CD4-positive, alpha-beta T cell (primary cell): ENCODE measurements at regions of chr14 and their contacts with region 1.

Region 1: DNA sequence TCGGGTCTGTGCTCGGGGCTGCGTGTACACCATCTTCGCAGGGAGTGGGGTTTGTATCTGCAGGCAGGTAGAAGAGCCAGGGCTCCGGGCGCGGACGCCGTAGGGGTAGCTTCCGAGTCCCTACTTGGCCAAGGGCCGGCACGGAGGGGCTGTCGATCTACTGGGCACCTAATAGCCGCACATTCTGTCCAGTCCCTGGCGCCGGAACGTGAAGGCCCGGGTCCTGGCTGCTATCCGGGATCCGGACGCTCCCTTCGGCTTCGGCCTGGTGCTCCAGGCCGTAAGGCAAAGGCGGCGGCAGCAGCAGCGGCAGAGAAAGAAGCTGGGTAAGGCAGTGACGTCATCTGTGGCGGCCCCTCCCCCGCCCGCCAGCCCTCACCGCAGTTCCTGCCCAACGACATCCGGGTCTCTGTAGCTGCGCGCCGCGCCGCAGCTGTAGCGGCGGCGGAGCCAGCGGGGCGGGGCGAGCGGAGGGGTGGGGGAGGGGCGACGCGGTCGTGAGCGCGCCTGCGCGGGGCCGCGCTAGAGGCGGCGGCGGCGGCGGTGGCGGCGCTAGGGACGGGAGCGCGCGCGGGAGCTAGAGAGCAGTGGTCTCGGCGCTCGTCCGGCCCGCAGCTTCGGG is at the start of gene PPM1A:
- DNase-seq: peak; percentile 94 to 99 (median 96)
- ATAC-seq: peak; percentile 71
- H3K4me3 ChIP-seq: peak within 1 kb of the TSS; percentile 92
- H3K4me3 Mint-ChIP-seq: peak within 1 kb of the TSS; percentile 96
- H3K27ac ChIP-seq: peak within 1 kb of the TSS; percentile 100
- H3K27ac Mint-ChIP-seq: peak within 1 kb of the TSS; percentile 97
- H3K4me1 ChIP-seq: peaks cover 23% of the 10 kb centered on the region
- H3K4me1 Mint-ChIP-seq: peaks cover 53% of the 10 kb centered on the region
- H3K27me3 ChIP-seq: no peaks in the 10 kb centered on the region
- H3K27me3 Mint-ChIP-seq: no peaks in the 10 kb centered on the region
- CTCF ChIP-seq: no peak
- total RNA-seq, gene PPM1A: 96.9 to 97.2 TPM

Region 2: GRCh38 chr14:58427281-58428117 is 1821.3 kb before region 1 on chr14 and contains the starts of genes KIAA0586 and TIMM9:
- CTCF ChIA-PET with region 1: no interaction called
- POLR2A ChIA-PET with region 1: interaction called, 13 read pairs
- intact Hi-C with region 1: no loop called
- DNase-seq: peak; percentile 91 to 99 (median 96)
- ATAC-seq: peak; percentile 90
- H3K4me3 ChIP-seq: peak within 1 kb of the TSS; percentile 81
- H3K4me3 Mint-ChIP-seq: peak within 1 kb of the TSS; percentile 92
- H3K27ac ChIP-seq: peak within 1 kb of the TSS; percentile 86 to 95
- H3K27ac Mint-ChIP-seq: peak within 1 kb of the TSS; percentile 93
- H3K4me1 ChIP-seq: peaks cover 18% of the 10 kb centered on the region
- H3K4me1 Mint-ChIP-seq: peaks cover 70% of the 10 kb centered on the region
- H3K27me3 ChIP-seq: no peaks in the 10 kb centered on the region
- H3K27me3 Mint-ChIP-seq: no peaks in the 10 kb centered on the region
- CTCF ChIP-seq: no peak
- total RNA-seq, gene KIAA0586: 16.5 to 18.2 TPM
- total RNA-seq, gene TIMM9: 33.1 to 34.9 TPM

Region 3: DNA sequence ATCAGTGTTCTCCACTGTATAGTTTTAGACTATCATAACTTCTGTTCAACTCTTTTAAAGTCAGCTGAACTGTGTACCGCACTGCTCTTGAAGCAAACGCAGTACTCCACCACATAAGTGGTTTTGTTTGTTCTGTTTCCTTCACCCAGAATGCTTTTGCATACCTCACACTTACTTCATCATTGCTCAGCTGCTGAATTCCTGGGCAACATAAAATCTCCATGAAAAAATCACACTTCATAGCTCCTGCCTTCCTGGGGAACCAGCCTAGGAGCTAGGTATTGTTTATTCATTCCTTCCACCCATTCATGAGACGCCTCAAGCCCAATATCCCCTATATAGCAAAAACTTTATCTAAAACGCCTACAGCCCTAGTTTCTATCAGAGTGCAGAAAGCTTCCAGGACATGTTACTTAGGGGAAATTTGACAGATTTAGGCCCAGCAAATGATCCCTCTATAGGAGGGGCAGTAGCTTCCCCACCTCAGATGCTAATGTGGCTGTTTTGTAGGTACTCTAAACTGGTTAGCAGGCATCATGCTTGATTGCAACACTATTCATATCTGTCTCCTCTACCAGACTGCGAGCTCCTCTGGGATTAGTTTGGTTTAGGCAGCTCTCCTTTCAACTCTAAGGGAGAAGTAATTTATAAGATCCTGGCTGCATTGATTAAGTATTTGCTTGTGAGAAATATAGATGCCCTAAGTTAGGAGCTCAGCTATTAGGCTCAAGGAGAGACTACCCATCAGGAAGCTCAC is 284.4 kb before region 1 on chr14:
- CTCF ChIA-PET with region 1: interaction called, 8 read pairs
- POLR2A ChIA-PET with region 1: interaction called, 41 read pairs
- intact Hi-C with region 1: loop called in 1 of 2 experiments (anchors 5 kb)
- DNase-seq: peak in 2 of 14 experiments; percentile 13 to 18
- ATAC-seq: peak; percentile 10
- H3K4me3 ChIP-seq: peak overlapping the region; percentile 64
- H3K4me3 Mint-ChIP-seq: peak overlapping the region; percentile 94
- H3K27ac ChIP-seq: no peak overlapping the region
- H3K27ac Mint-ChIP-seq: peak overlapping the region; percentile 96
- H3K4me1 ChIP-seq: peaks cover 9% of the 10 kb centered on the region
- H3K4me1 Mint-ChIP-seq: peaks cover 22% of the 10 kb centered on the region
- H3K27me3 ChIP-seq: no peaks in the 10 kb centered on the region
- H3K27me3 Mint-ChIP-seq: no peaks in the 10 kb centered on the region
- CTCF ChIP-seq: no peak

Region 4: GRCh38 chr14:60164712-60165546 is 83.9 kb before region 1 on chr14 and contains the start of gene DHRS7:
- CTCF ChIA-PET with region 1: no interaction called
- POLR2A ChIA-PET with region 1: interaction called, 93 read pairs
- intact Hi-C with region 1: loop called in 1 of 2 experiments (anchors 5 kb)
- DNase-seq: peak; percentile 33 to 87 (median 54)
- ATAC-seq: peak; percentile 73
- H3K4me3 ChIP-seq: peak within 1 kb of the TSS; percentile 70
- H3K4me3 Mint-ChIP-seq: peak within 1 kb of the TSS; percentile 96
- H3K27ac ChIP-seq: peak within 1 kb of the TSS; percentile 88 to 90
- H3K27ac Mint-ChIP-seq: peak within 1 kb of the TSS; percentile 97
- H3K4me1 ChIP-seq: peaks cover 32% of the 10 kb centered on the region
- H3K4me1 Mint-ChIP-seq: peaks cover 53% of the 10 kb centered on the region
- H3K27me3 ChIP-seq: no peaks in the 10 kb centered on the region
- H3K27me3 Mint-ChIP-seq: no peaks in the 10 kb centered on the region
- CTCF ChIP-seq: no peak
- total RNA-seq, gene DHRS7: 24.5 to 28.6 TPM

Region 5: GRCh38 chr14:60266021-60266937 is 17.5 kb after region 1 on chr14:
- CTCF ChIA-PET with region 1: interaction called, 7 read pairs
- POLR2A ChIA-PET with region 1: interaction called, 16 read pairs
- intact Hi-C with region 1: loop called (anchors 2 kb)
- DNase-seq: peak in 8 of 14 experiments; percentile 1 to 55 (median 20)
- ATAC-seq: peak; percentile 58
- H3K4me3 ChIP-seq: no peak overlapping the region
- H3K4me3 Mint-ChIP-seq: no peak overlapping the region
- H3K27ac ChIP-seq: no peak overlapping the region
- H3K27ac Mint-ChIP-seq: no peak overlapping the region
- H3K4me1 ChIP-seq: peaks cover 2% of the 10 kb centered on the region
- H3K4me1 Mint-ChIP-seq: peaks cover 50% of the 10 kb centered on the region
- H3K27me3 ChIP-seq: no peaks in the 10 kb centered on the region
- H3K27me3 Mint-ChIP-seq: no peaks in the 10 kb centered on the region
- CTCF ChIP-seq: peak; percentile 73

Region 6: GRCh38 chr14:60331201-60332045 is 82.6 kb after region 1 on chr14:
- CTCF ChIA-PET with region 1: interaction called, 5 read pairs
- POLR2A ChIA-PET with region 1: interaction called, 58 read pairs
- intact Hi-C with region 1: loop called in 1 of 2 experiments (anchors 5 kb)
- DNase-seq: peak; percentile 55 to 86 (median 72)
- ATAC-seq: peak; percentile 78
- H3K4me3 ChIP-seq: peak overlapping the region; percentile 54
- H3K4me3 Mint-ChIP-seq: peak overlapping the region; percentile 96
- H3K27ac ChIP-seq: peak overlapping the region in 1 of 2 donors; percentile 29
- H3K27ac Mint-ChIP-seq: peak overlapping the region; percentile 85
- H3K4me1 ChIP-seq: peaks cover 13% of the 10 kb centered on the region
- H3K4me1 Mint-ChIP-seq: peaks cover 32% of the 10 kb centered on the region
- H3K27me3 ChIP-seq: peaks cover 3 to 6% of the 10 kb centered on the region in 2 experiments
- H3K27me3 Mint-ChIP-seq: peaks cover 56% of the 10 kb centered on the region
- CTCF ChIP-seq: peak; percentile 88

Region 7: DNA sequence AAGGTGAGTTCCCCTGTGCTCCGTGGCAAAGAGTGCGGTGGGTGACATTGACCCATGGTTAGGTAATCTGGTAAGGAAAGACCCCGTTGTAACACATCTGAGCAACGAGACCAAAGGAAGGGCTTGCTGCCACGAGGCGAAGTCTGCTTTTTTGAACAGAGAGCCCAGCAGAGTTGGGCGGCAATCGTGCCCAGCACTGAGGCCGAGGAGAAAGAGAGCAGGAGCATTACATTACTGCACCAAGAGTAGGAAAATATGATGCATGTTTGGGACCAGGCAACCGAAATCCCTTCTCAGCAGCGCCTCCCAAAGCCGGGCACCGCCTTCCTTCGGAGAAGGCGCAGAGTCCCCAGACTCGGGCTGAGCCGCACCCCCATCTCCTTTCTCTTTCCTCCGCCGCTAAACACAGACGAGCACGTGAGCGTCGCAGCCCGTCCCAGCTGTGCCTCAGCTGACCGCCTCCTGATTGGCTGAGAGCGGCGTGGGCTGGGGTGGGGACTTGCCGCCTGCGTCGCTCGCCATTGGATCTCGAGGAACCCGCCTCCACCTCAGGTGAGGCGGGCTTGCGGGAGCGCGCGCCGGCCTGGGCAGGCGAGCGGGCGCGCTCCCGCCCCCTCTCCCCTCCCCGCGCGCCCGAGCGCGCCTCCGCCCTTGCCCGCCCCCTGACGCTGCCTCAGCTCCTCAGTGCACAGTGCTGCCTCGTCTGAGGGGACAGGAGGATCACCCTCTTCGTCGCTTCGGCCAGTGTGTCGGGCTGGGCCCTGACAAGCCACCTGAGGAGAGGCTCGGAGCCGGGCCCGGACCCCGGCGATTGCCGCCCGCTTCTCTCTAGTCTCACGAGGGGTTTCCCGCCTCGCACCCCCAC is 1446.3 kb after region 1 on chr14 and contains the start of gene HIF1A:
- CTCF ChIA-PET with region 1: no interaction called
- POLR2A ChIA-PET with region 1: interaction called, 7 read pairs
- intact Hi-C with region 1: loop called in 1 of 2 experiments (anchors 10 kb)
- DNase-seq: peak; percentile 87 to 100 (median 95)
- ATAC-seq: peak; percentile 95
- H3K4me3 ChIP-seq: peak within 1 kb of the TSS; percentile 90
- H3K4me3 Mint-ChIP-seq: peak within 1 kb of the TSS; percentile 98
- H3K27ac ChIP-seq: peak within 1 kb of the TSS; percentile 89 to 91
- H3K27ac Mint-ChIP-seq: peak within 1 kb of the TSS; percentile 97
- H3K4me1 ChIP-seq: peaks cover 17% of the 10 kb centered on the region
- H3K4me1 Mint-ChIP-seq: peaks cover 72% of the 10 kb centered on the region
- H3K27me3 ChIP-seq: no peaks in the 10 kb centered on the region
- H3K27me3 Mint-ChIP-seq: no peaks in the 10 kb centered on the region
- CTCF ChIP-seq: no peak
- total RNA-seq, gene HIF1A: 350 to 369 TPM